Endothelial cell of umbilical vein (primary cell): ENCODE measurements at regions of chr12 and their contacts with region 1.

Region 1: DNA sequence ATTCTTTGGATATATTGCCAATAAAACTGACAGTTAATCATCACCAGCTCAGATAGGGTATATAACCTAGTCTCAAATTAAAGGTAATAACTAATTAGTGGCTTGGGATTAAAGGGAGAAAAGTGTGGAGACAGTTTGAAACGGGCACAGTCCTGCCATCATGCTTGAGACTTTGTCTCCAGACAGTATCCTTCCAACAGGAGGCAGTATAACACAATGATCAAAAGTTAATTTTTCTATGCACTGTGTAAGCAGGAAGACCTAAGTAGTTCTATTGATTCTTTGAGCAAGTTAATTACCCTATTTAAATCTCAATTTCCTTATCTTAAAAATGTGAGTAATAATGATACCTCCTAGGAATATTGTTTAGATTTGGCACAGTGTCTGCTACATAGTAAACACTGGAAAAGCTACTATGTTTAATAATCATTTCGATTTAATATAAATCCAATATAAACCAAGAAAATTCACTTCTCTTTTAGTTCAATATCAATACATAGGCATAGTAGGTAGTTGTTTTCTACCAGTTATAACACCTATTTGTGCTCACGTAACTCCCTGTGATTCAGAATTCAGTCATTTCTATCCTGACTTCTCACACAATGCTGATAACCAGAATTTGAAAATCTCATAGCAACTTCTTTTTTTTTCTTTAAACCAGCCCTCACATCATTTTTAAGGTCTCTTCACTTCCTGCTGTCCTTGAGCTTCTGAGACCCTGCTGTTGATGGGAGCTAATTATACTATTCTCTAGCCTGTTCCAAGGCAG is 53.7 kb downstream of the GALNT4 start:
- DNase-seq: peak; percentile 73
- H3K4me3 ChIP-seq: no peak overlapping the region
- H3K27ac ChIP-seq: no peak overlapping the region
- H3K4me1 ChIP-seq: peaks cover 9% of the 10 kb centered on the region
- H3K27me3 ChIP-seq: no peaks in the 10 kb centered on the region
- CTCF ChIP-seq: peak; percentile 40 to 56
- POLR2A ChIP-seq: no peak

Region 2: DNA sequence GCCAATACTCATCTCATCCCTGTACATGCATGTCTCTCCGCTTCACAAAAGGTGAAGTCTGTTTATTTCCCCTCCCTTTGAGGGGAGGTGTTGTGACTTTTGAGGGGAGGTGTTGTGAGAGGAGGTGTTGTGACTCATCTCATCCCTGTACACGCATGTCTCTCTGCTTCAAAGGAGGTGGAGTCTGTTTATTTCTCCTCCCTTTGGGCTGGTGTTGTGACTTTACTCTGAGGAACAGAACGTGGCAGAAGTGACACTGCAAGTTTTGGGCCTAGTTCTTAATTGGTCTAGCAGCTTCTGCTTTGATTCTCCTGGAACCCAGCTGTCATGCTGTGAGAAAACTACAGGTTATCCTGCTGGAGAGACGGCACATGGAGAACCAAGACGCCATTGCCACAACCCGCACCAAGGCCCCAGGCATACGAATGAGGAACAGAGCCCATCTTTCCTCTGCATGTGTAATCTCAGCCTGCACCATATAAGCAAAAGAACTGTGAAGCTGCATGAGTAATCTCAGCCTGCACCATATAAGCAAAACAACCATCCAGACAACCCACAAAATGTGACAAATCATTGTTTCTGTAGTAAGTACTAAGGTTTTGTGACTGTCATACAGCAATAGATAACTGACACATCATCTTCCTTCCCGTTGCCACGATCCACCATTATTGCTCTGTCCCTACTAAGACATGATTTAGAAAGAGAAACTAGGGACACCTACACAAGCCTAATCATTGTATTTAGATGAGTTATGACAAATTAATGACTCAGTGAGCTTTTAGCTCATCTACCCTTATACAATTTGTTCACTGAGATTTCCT is 23.7 kb after region 1 on chr12:
- CTCF ChIA-PET with region 1: no interaction called
- POLR2A ChIA-PET with region 1: no interaction called
- dilution Hi-C with region 1: no loop called
- intact Hi-C with region 1: no loop called
- DNase-seq: no peak
- H3K4me3 ChIP-seq: no peak overlapping the region
- H3K27ac ChIP-seq: no peak overlapping the region
- H3K4me1 ChIP-seq: no peaks in the 10 kb centered on the region
- H3K27me3 ChIP-seq: no peaks in the 10 kb centered on the region
- CTCF ChIP-seq: no peak
- POLR2A ChIP-seq: no peak

Region 3: DNA sequence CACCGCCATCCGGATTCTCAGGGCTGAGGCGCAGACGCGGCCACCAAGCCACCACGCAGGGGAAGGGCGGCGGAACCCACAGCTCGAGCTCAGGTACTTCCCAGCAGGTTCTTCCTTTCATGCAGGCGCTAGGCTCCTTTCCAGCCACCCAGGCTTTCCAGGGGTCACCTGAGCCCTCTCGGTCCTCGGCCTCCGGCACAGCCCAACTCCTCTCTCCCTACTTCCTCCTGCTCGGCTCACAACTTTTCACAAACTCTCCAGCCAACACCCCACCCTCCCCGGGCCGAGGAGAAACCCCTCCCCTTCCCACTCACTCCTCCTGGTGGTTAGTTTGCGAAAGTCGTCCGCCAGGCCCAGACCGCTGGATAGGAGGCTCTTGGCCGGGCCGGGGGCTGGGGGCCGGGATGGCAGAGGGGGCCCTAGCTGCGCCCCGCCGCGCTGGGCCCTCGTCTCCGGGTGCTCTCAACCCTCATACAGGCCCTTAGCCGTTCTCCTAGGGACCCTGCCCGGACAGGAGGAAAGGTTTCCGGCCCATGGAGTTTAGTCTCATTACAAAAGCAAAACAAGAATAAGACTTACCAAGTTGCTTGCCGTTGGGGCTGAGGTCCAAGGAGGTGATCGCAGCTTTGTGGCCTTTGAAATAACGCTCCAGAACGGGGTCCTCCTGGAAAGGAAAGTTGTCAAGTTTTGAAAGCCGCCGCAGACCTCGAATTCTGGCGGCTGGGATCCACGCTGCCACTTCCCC is 53.8 kb after region 1 on chr12 and contains the start of gene GALNT4:
- CTCF ChIA-PET with region 1: interaction called, 24 read pairs
- POLR2A ChIA-PET with region 1: no interaction called
- dilution Hi-C with region 1: no loop called
- intact Hi-C with region 1: loop called (anchors 1 kb)
- DNase-seq: peak; percentile 92
- H3K4me3 ChIP-seq: peak within 1 kb of the TSS; percentile 16 to 92 (median 59)
- H3K27ac ChIP-seq: peak within 1 kb of the TSS; percentile 35
- H3K4me1 ChIP-seq: peaks cover 32% of the 10 kb centered on the region
- H3K27me3 ChIP-seq: no peaks in the 10 kb centered on the region
- CTCF ChIP-seq: peak; percentile 40 to 82
- POLR2A ChIP-seq: peak; percentile 25
- total RNA-seq, gene GALNT4: 9.8 and 10.9 TPM in 2 replicates

Region 4: DNA sequence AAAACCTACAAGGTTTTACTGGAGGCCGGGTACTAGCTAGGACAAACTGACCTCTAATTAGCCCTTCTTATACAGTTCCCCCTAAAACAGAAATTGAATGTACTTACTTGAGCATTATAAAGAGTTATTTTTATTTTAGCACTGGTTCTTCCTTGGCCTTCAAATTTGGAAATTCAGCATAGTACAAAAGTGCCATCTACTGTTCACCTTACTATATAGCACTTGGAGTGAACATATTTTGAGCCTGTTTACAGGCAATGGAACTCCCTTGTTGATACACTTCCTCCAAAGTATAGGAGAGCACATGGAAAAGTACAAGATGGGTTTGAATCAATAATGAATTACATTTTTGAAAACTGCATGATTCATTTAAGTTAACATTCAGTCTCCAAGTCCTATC is 58.8 kb after region 1 on chr12:
- CTCF ChIA-PET with region 1: interaction called, 24 read pairs
- POLR2A ChIA-PET with region 1: no interaction called
- dilution Hi-C with region 1: no loop called
- intact Hi-C with region 1: loop called (anchors 1 kb)
- DNase-seq: peak; percentile 73
- H3K4me3 ChIP-seq: no peak overlapping the region
- H3K27ac ChIP-seq: no peak overlapping the region
- H3K4me1 ChIP-seq: peaks cover 4% of the 10 kb centered on the region
- H3K27me3 ChIP-seq: no peaks in the 10 kb centered on the region
- CTCF ChIP-seq: peak; percentile 49 to 51
- POLR2A ChIP-seq: no peak

Region 5: DNA sequence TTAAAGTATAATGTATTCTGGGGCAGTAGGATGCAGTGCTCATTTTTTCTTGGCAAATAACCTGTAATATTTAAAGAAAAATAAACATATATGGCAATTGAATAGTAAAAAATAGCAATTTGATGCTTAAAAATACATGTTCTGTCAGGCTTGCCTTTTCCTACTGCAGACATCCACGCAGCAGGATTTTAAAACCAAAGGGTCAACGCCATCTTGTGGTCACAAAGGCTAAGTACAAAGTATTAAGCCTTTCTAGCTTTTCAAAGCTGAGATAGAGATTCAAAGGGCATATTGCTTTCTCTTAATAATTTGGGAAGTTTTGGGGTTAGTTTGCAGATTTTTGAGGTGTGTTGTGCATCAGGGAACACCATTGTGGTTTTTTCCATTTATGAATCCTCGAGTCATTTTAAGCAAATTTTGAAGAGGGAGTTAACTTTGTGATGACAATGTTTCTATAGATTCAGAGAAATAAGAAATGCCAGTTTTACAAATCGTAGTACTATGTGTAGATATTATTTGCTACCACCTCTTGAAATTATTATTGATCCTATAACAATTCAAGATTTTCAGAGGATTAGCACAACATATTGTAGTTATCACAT is 1488.7 kb after region 1 on chr12:
- CTCF ChIA-PET with region 1: interaction called, 3 read pairs
- POLR2A ChIA-PET with region 1: no interaction called
- dilution Hi-C with region 1: no loop called
- intact Hi-C with region 1: loop called (anchors 5 kb)
- DNase-seq: peak; percentile 54
- H3K4me3 ChIP-seq: no peak overlapping the region
- H3K27ac ChIP-seq: no peak overlapping the region
- H3K4me1 ChIP-seq: no peaks in the 10 kb centered on the region
- H3K27me3 ChIP-seq: no peaks in the 10 kb centered on the region
- CTCF ChIP-seq: peak; percentile 57 to 74
- POLR2A ChIP-seq: no peak